ENCODE measurements at regions of chr3 and their contacts with region 1.

Region 1: DNA sequence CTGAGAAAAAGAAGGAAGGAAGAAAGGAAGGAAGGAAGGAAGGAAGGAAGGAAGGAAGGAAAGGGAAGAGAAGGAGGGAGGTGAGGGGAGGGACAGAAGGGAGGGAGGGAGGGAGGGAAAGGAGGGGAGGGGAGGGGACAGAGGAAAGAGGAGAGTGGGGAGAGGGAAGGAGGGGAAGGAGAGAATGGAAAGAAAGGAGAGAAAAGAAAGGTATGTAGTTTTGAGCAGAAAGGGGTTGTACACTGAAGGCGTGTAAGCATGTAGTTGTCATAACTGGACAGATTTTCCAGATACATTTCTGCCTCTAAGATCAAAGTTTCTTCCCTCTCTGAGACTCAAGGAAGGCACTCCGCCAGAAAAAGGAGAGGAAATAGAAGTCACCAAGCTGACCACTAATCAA is 113.4 kb upstream of the KBTBD8 start:
- DNase-seq: no peak
- H3K4me3 ChIP-seq: no peak overlapping the region
- H3K27ac ChIP-seq: no peak overlapping the region
- H3K4me1 ChIP-seq: no peaks in the 10 kb centered on the region
- H3K27me3 ChIP-seq: no peaks in the 10 kb centered on the region
- CTCF ChIP-seq: no peak
- EP300 ChIP-seq: no peak
- POLR2A ChIP-seq: no peak

Region 2: GRCh38 chr3:66121318-66121717 is 763.3 kb before region 1 on chr3:
- intact Hi-C with region 1: no loop called
- DNase-seq: no peak
- H3K4me3 ChIP-seq: no peak overlapping the region
- H3K27ac ChIP-seq: no peak overlapping the region
- H3K4me1 ChIP-seq: no peaks in the 10 kb centered on the region
- H3K27me3 ChIP-seq: no peaks in the 10 kb centered on the region
- CTCF ChIP-seq: no peak
- EP300 ChIP-seq: no peak
- POLR2A ChIP-seq: no peak

Region 3: DNA sequence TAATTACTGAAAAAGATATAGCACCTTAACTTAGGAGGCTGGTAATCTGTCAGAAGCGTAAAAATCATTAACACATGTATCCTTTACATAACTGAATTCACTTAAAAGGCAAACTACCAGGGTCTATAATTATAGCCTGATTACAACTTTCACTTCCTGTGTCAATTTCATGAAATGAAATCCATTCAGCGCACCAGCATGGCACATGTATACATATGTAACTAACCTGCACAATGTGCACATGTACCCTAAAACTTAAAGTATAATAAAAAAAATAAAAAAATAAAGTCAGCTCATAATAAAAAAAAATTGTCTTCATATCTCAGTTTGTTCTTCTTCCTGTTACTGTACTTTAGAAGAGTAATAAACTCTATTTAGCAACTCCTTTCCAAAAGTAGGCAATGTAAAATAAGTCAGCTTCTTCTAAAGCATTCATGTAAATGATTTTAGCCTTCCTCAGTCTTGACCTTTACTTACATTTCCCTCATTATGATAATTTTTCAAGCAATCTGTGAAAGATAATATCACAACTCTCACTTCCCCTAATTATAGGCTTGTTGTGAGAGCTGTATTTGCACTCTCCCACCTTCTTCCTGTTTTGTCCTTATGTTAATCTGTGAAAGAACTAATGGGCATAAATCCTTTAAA is 163.5 kb after region 1 on chr3:
- intact Hi-C with region 1: no loop called
- DNase-seq: no peak
- H3K4me3 ChIP-seq: no peak overlapping the region
- H3K27ac ChIP-seq: no peak overlapping the region
- H3K4me1 ChIP-seq: no peaks in the 10 kb centered on the region
- H3K27me3 ChIP-seq: no peaks in the 10 kb centered on the region
- CTCF ChIP-seq: no peak
- EP300 ChIP-seq: no peak
- POLR2A ChIP-seq: no peak

Region 4: DNA sequence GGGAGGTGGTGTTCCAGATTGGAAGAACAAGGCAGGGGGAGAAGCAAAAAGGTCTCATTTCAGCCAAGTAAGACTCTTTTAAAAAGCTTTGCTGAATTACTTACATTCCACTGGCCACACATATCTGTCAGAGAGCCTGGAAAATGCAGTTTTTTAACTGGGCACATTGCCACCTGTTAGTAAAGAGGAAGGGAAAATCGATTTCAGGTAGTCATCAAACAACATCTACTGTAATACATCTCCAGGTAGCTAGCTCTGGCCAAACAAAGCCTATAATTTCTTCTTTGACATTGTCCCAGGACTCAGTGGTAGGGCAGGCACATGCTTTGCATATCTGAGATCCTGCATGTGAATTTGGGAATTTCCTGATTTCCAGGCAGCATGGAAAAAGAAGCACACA is 1250.4 kb after region 1 on chr3:
- intact Hi-C with region 1: loop called in 1 of 4 experiments (anchors 5 kb)
- DNase-seq: no peak
- H3K4me3 ChIP-seq: no peak overlapping the region
- H3K27ac ChIP-seq: no peak overlapping the region
- H3K4me1 ChIP-seq: no peaks in the 10 kb centered on the region
- H3K27me3 ChIP-seq: no peaks in the 10 kb centered on the region
- CTCF ChIP-seq: no peak
- EP300 ChIP-seq: no peak
- POLR2A ChIP-seq: no peak